HCT116 (cell line): ENCODE measurements at regions of chr3 and their contacts with region 1.

Region 1: GRCh38 chr3:69161587-69162307 is 39.4 kb upstream of the LMOD3 start:
- DNase-seq: peak; percentile 41
- ATAC-seq: peak; percentile 74
- H3K4me3 ChIP-seq: no peak overlapping the region
- H3K27ac ChIP-seq: no peak overlapping the region
- H3K4me1 ChIP-seq: no peaks in the 10 kb centered on the region
- H3K27me3 ChIP-seq: no peaks in the 10 kb centered on the region
- CTCF ChIP-seq: peak; percentile 81 to 94 (median 88)
- POLR2A ChIP-seq: no peak
- RAD21 ChIP-seq: peak; percentile 95

Region 2: GRCh38 chr3:69120879-69121464 is 40.8 kb before region 1 on chr3:
- CTCF ChIA-PET with region 1: interaction called, 18 read pairs
- POLR2A ChIA-PET with region 1: no interaction called
- RAD21 ChIA-PET with region 1: interaction called in 1 of 2 experiments, 3 read pairs
- intact Hi-C with region 1: loop called (anchors 1 kb)
- DNase-seq: peak; percentile 86
- ATAC-seq: peak; percentile 92
- H3K4me3 ChIP-seq: no peak overlapping the region
- H3K27ac ChIP-seq: no peak overlapping the region
- H3K4me1 ChIP-seq: peaks cover 0 to 16% of the 10 kb centered on the region in 2 experiments; a peak in 3 of 4 replicates
- H3K27me3 ChIP-seq: no peaks in the 10 kb centered on the region
- CTCF ChIP-seq: peak; percentile 61 to 94 (median 92)
- POLR2A ChIP-seq: no peak
- RAD21 ChIP-seq: peak; percentile 83

Region 3: GRCh38 chr3:69306239-69307185 is 144.8 kb after region 1 on chr3:
- CTCF ChIA-PET with region 1: interaction called, 63 read pairs
- POLR2A ChIA-PET with region 1: no interaction called
- RAD21 ChIA-PET with region 1: interaction called, 5 to 6 read pairs
- intact Hi-C with region 1: loop called (anchors 1 kb)
- DNase-seq: peak; percentile 59
- ATAC-seq: peak; percentile 99
- H3K4me3 ChIP-seq: no peak overlapping the region
- H3K27ac ChIP-seq: no peak overlapping the region
- H3K4me1 ChIP-seq: 0 out of 4 replicates have a peak, but pooled peaks cover 0 to 3% of the 10 kb centered on the region in 2 experiments
- H3K27me3 ChIP-seq: no peaks in the 10 kb centered on the region
- CTCF ChIP-seq: peak; percentile 80 to 93 (median 89)
- POLR2A ChIP-seq: no peak
- RAD21 ChIP-seq: peak; percentile 91

Region 4: DNA sequence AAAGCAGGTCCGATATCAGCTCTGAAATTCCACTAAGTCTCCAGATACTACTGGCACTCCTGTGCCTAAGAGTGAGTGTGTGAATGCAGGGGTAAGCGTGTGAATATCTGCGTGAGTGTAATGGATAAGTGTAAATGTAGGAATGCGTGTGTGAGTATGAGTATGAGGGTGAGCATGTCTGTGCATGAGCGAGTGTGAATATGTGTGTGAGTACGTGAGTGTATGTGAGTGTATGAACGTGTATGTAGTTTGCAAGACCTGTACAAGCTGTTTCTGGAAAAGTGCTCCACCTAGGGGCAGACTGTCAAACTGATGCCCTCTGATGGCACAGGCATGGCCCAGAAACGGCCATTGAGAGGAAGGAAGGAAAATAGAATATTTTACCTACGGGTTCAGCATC is 248.5 kb after region 1 on chr3:
- CTCF ChIA-PET with region 1: interaction called, 17 read pairs
- POLR2A ChIA-PET with region 1: no interaction called
- RAD21 ChIA-PET with region 1: no interaction called
- intact Hi-C with region 1: loop called (anchors 1 kb)
- DNase-seq: peak; percentile 51
- ATAC-seq: peak; percentile 99
- H3K4me3 ChIP-seq: no peak overlapping the region
- H3K27ac ChIP-seq: no peak overlapping the region
- H3K4me1 ChIP-seq: peaks cover 0 to 5% of the 10 kb centered on the region in 2 experiments; a peak in 1 of 4 replicates
- H3K27me3 ChIP-seq: no peaks in the 10 kb centered on the region
- CTCF ChIP-seq: peak; percentile 47 to 86 (median 79); a peak in 5 of 6 replicates
- POLR2A ChIP-seq: no peak
- RAD21 ChIP-seq: peak; percentile 57

Region 5: GRCh38 chr3:69425261-69425660 is 263.5 kb after region 1 on chr3:
- CTCF ChIA-PET with region 1: interaction called, 27 read pairs
- POLR2A ChIA-PET with region 1: no interaction called
- RAD21 ChIA-PET with region 1: no interaction called
- intact Hi-C with region 1: loop called (anchors 1 kb)
- DNase-seq: peak; percentile 21
- ATAC-seq: peak; percentile 82
- H3K4me3 ChIP-seq: no peak overlapping the region
- H3K27ac ChIP-seq: no peak overlapping the region
- H3K4me1 ChIP-seq: peaks cover 0 to 4% of the 10 kb centered on the region in 2 experiments; a peak in 1 of 4 replicates
- H3K27me3 ChIP-seq: no peaks in the 10 kb centered on the region
- CTCF ChIP-seq: peak; percentile 34 to 60 (median 56); a peak in 5 of 6 replicates
- POLR2A ChIP-seq: no peak
- RAD21 ChIP-seq: peak; percentile 60

Region 6: GRCh38 chr3:69439643-69440270 is 278.0 kb after region 1 on chr3:
- CTCF ChIA-PET with region 1: interaction called, 14 read pairs
- POLR2A ChIA-PET with region 1: no interaction called
- RAD21 ChIA-PET with region 1: no interaction called
- intact Hi-C with region 1: loop called (anchors 1 kb)
- DNase-seq: peak; percentile 16
- ATAC-seq: no peak
- H3K4me3 ChIP-seq: no peak overlapping the region
- H3K27ac ChIP-seq: no peak overlapping the region
- H3K4me1 ChIP-seq: no peaks in the 10 kb centered on the region
- H3K27me3 ChIP-seq: no peaks in the 10 kb centered on the region
- CTCF ChIP-seq: peak; percentile 37 to 75 (median 66); a peak in 5 of 6 replicates
- POLR2A ChIP-seq: no peak
- RAD21 ChIP-seq: peak; percentile 44

Region 7: DNA sequence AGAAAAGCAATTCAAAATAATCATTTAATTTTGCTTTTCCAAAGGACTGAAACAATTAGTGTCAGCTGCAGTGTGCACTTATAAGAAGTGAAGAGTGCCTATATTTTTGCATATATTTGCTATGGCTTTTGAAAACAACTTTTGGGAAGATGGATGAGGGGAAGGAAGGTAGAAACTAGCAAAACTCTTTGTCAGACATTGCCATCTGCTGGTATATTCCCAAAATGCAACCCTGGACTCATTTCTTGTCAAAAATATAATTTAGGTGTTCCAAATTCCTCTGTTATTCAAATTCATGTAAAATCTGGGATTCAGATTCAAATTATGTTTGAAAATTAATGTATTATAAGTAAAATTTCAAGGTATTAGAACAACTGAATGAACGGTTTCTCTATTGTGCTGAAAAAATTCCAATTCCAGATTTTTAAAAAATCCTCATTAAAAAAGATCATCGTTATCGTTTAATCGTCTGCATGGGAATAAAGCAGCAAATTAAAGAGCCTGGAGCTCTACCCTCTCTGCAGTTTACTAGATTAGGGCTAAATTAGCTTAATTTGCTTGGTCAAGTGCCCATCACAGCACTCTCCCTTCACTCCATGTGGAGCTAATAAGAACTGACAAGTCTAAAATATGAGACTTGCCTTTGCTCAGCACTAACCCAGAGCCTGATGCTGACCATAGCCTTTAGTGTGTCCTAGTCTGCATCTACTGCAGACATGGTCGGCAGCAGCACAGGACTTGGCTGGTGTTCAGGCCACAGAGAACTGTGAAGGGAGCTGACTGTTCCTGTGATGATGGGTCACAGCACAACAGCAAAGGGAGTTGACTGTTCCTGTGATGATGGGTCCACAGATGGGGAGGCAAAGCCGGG is 509.6 kb after region 1 on chr3:
- CTCF ChIA-PET with region 1: no interaction called
- POLR2A ChIA-PET with region 1: no interaction called
- RAD21 ChIA-PET with region 1: no interaction called
- intact Hi-C with region 1: loop called (anchors 1 kb)
- DNase-seq: peak; percentile 15
- ATAC-seq: peak; percentile 47; the same call in 1 of the 2 replicates
- H3K4me3 ChIP-seq: no peak overlapping the region
- H3K27ac ChIP-seq: no peak overlapping the region
- H3K4me1 ChIP-seq: no peaks in the 10 kb centered on the region
- H3K27me3 ChIP-seq: no peaks in the 10 kb centered on the region
- CTCF ChIP-seq: peak; percentile 38 to 73 (median 49); a peak in 5 of 6 replicates
- POLR2A ChIP-seq: no peak
- RAD21 ChIP-seq: peak; percentile 67